Mammary epithelial cell (primary cell): ENCODE measurements at regions of chr11 and their contacts with region 1.

Region 1: DNA sequence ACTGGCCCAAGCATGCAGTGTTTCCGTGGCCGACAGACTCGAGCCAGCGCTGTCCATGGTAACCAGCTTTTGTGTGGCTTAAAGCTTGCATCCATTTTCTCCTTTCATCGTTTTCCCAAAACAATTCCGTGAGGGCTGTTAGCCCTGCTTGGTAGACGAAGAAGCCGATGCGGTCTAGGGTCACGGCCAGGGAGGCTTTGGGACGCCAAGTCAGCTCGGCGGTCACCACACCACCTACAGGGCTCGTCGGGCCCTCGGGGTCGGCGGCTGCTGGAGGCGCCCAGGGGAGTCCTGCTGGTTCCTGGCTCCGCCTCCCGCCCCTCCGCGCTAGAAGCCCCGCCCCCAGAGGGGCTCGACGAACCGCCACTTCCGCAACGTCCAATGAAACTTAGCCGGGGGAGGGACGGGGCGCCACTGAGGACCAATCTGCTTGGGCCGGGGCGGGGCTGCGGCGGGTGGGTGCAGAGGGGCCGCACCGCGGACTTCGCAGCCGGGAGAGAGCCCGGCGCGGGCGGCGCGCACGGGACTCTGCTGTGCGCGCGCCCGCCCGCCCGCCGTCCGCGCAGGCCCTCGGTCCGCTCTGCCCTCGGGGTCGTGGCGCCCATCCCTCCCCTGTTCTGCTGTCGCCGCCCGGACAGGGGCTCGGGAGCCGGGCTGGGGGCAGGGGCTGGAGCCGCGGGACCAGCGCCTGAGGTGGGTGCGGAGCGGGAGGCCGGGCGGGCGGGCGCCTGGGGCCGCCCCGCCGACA is at the start of gene TIGD3:
- DNase-seq: peak; percentile 90
- H3K4me3 ChIP-seq: peak within 1 kb of the TSS; percentile 41 to 72 (median 55)
- H3K27ac ChIP-seq: no peak within 1 kb of the TSS
- H3K4me1 ChIP-seq: peaks cover 15% of the 10 kb centered on the region
- H3K27me3 ChIP-seq: peaks cover 12% of the 10 kb centered on the region
- CTCF ChIP-seq: no peak
- total RNA-seq, gene TIGD3: not detected

Region 2: GRCh38 chr11:64803163-64803845 is 551.1 kb before region 1 on chr11 and contains the start of gene MAP4K2:
- CTCF ChIA-PET with region 1: no interaction called
- dilution Hi-C with region 1: loop called (anchors 10 kb)
- in situ Hi-C with region 1: no loop called
- intact Hi-C with region 1: no loop called
- DNase-seq: peak; percentile 77
- H3K4me3 ChIP-seq: peak within 1 kb of the TSS; percentile 56 to 78 (median 69)
- H3K27ac ChIP-seq: peak within 1 kb of the TSS; percentile 82
- H3K4me1 ChIP-seq: peaks cover 14% of the 10 kb centered on the region
- H3K27me3 ChIP-seq: no peaks in the 10 kb centered on the region
- CTCF ChIP-seq: peak in 1 of 2 donors; percentile 33
- total RNA-seq, gene MAP4K2: 15.4 to 15.5 TPM

Region 3: DNA sequence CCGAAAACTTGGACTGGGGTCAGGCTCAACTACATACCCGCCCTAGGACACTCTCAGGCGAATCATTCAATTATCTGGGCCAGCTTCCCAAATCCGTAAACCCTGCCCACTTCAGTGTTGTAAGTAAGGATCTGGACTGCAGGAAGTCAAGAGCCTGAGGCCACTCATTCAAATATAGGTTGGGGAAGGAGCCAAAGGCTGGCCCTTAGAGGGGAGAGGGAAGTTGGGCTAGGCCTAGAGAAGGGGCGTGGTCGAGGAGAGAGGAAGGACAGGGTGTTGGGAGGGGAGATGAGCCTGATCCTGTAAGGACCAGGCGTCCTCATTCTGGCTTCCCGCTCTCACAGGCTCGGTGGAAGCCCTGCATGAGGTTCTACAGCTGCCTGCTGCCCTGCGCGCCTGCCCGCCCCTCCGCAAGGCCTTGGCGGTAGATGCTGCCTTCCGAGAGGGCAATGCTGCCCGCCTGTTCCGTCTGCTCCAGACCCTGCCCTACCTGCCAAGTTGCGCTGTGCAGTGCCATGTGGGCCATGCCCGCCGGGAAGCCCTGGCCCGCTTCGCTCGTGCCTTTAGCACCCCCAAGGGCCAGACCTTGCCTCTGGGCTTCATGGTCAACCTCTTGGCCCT is 310.4 kb before region 1 on chr11:
- CTCF ChIA-PET with region 1: no interaction called
- dilution Hi-C with region 1: no loop called
- in situ Hi-C with region 1: no loop called
- intact Hi-C with region 1: no loop called
- DNase-seq: peak; percentile 8
- H3K4me3 ChIP-seq: no peak overlapping the region
- H3K27ac ChIP-seq: no peak overlapping the region
- H3K4me1 ChIP-seq: peaks cover 16% of the 10 kb centered on the region
- H3K27me3 ChIP-seq: no peaks in the 10 kb centered on the region
- CTCF ChIP-seq: no peak

Region 4: GRCh38 chr11:65321828-65322485 is 32.5 kb before region 1 on chr11:
- CTCF ChIA-PET with region 1: interaction called, 4 read pairs
- dilution Hi-C with region 1: loop called (anchors 5 kb)
- in situ Hi-C with region 1: no loop called
- intact Hi-C with region 1: no loop called
- DNase-seq: no peak
- H3K4me3 ChIP-seq: no peak overlapping the region
- H3K27ac ChIP-seq: no peak overlapping the region
- H3K4me1 ChIP-seq: peaks cover 7% of the 10 kb centered on the region
- H3K27me3 ChIP-seq: no peaks in the 10 kb centered on the region
- CTCF ChIP-seq: no peak

Region 5: DNA sequence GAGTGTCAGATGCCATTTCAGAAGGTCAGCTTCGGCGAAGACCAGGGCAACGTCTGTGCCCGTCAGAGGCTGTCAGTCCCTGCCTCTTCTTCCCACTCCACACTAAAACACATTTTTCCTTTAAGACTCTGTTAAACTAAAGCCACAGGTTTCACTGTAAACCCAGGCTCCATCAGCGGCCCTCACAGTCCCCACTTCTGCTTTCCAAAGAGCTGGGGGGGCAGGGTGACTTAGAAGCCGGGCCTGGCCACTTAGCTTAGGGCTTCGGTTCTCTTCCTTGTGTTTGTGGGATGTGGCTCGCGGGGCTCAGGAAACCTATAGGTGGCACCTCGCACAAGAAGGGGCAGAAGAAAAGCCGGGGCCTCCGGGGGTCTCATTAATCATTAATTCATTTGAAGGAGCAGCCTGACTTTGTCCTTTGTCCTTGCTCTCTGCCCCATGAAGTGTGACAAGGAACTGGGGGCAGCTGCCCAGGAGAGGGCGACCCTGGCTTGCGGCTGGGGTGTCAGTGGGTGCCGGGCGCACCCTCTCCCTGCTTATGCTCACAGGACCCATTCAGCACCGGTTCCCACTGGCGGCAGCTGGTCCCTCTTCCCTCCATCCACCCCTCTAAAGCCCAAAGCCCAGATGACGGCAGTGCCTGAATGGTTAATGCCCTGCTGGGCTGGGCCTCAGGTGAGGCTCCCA is 23.9 kb after region 1 on chr11:
- CTCF ChIA-PET with region 1: no interaction called
- dilution Hi-C with region 1: no loop called
- in situ Hi-C with region 1: no loop called
- intact Hi-C with region 1: no loop called
- DNase-seq: no peak
- H3K4me3 ChIP-seq: no peak overlapping the region
- H3K27ac ChIP-seq: no peak overlapping the region
- H3K4me1 ChIP-seq: peaks cover 22% of the 10 kb centered on the region
- H3K27me3 ChIP-seq: no peaks in the 10 kb centered on the region
- CTCF ChIP-seq: peak in 1 of 2 donors; percentile 11

Region 6: DNA sequence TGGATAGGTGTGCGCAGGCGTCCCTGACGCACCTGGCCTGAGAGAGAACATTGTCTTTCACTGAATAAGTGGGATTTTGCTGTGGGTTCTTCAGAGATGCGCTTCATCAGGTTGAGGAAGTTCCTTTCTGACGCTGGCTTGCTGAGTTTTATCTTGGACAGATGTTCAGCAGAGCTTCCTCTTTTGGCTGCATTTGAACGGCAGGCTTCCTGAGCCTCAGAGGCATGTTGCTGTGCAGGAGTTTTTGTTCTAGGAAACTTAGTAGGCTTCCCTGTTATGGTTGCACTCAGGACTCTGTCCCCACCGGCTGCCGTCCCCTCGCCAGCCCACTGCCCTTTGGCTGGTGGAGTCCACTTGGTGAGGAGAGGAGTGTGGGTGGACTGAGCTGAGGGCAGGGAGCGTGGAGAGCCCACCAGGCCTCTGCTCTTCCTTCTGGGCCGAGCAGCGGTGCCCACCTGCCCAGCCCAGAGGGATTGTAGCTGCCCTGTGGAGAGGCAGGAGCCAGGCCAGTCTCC is 49.2 kb after region 1 on chr11:
- CTCF ChIA-PET with region 1: no interaction called
- dilution Hi-C with region 1: no loop called
- in situ Hi-C with region 1: no loop called
- intact Hi-C with region 1: no loop called
- DNase-seq: no peak
- H3K4me3 ChIP-seq: no peak overlapping the region
- H3K27ac ChIP-seq: no peak overlapping the region
- H3K4me1 ChIP-seq: peaks cover under 1% of the 10 kb centered on the region
- H3K27me3 ChIP-seq: no peaks in the 10 kb centered on the region
- CTCF ChIP-seq: no peak